AG04449 (cell line): ENCODE measurements at regions of chr10 and their contacts with region 1.

Region 1: DNA sequence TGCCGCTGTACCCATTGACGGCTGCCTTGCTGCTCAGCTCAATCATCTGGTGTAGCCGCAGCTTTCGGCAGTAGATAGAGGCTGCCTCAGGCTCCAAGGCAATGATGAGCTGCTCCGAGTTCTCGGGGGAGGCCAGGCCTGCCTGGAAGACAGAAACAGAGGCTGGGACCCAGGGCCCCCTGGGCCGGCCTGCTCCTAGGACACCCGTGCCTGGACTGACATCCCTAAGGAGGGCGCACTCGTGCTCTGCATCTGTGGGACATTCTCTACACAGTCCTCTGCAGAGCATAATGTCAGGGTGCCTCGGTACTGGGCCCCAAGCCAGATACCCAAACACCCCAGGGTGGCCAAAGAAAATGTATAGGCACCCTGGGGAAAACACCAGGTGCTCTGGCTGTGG is 58.5 kb downstream of the HSPA12A start:
- DNase-seq: no peak
- H3K4me3 ChIP-seq: no peak overlapping the region
- CTCF ChIP-seq: no peak

Region 2: DNA sequence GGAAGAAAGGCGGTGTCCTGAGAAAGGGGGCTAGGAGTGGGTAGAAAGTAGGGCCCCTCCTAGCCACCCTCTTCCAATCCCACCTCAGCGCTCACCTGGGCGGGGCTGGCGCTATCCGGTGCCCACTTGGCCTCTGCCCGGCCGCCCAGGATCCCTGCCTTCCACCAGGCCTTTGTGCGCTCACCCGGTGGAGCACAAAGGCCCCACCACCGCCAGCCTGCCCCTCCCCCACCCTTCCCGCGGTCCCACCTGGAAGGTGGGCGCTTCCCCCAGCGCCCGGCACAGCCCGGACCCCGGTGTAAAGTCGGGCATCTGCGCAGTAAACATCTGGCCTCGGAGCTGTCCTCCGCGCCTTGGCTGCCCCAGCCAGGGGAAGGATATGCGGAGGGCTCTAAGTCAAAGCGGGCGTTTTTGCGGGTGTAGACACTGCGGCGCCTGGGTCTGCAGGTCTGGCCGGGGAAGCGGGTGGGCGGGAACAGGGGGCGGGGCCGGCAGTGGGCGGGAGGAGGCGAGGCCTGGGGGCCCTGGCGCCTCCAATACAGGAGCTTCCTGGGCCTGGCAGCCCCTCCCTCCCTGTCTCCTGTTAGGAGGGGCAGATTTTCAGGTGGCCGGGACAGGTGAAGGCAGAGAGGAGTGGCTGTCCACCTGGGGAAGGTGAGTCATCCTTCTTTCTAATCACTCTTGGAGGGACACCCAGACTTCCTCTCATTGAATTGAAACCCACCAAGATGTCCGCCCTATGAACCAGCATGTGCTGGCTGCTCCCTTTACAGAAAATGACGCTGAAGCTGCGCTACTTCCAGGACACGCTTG is 13.8 kb before region 1 on chr10:
- CTCF ChIA-PET with region 1: interaction called, 36 read pairs
- POLR2A ChIA-PET with region 1: no interaction called
- DNase-seq: no peak
- H3K4me3 ChIP-seq: no peak overlapping the region; the same call in 1 of the 2 replicates
- CTCF ChIP-seq: no peak

Region 3: GRCh38 chr10:116702165-116702564 is 18.3 kb after region 1 on chr10:
- CTCF ChIA-PET with region 1: interaction called, 13 read pairs
- POLR2A ChIA-PET with region 1: interaction called, 3 read pairs
- DNase-seq: no peak
- H3K4me3 ChIP-seq: no peak overlapping the region
- CTCF ChIP-seq: no peak

Region 4: GRCh38 chr10:116771101-116771958 is 87.5 kb after region 1 on chr10:
- CTCF ChIA-PET with region 1: interaction called, 658 read pairs
- POLR2A ChIA-PET with region 1: no interaction called
- DNase-seq: peak; percentile 76
- H3K4me3 ChIP-seq: no peak overlapping the region
- CTCF ChIP-seq: no peak